HEK293 (cell line): ENCODE measurements at regions of chr19 and their contacts with region 1.

Region 1: GRCh38 chr19:35290381-35291127 is 1.4 kb upstream of the MAG start:
- H3K4me3 ChIP-seq: no peak overlapping the region
- H3K27ac ChIP-seq: no peak overlapping the region
- H3K4me1 ChIP-seq: peaks cover 8% of the 10 kb centered on the region
- CTCF ChIP-seq: no peak

Region 2: GRCh38 chr19:35279985-35280821 is 10.4 kb before region 1 on chr19:
- CTCF ChIA-PET with region 1: interaction called, 17 read pairs
- POLR2A ChIA-PET with region 1: interaction called, 10 read pairs
- H3K4me3 ChIP-seq: no peak overlapping the region
- H3K27ac ChIP-seq: no peak overlapping the region
- H3K4me1 ChIP-seq: no peaks in the 10 kb centered on the region
- CTCF ChIP-seq: no peak